ENCODE measurements at regions of chr19 and their contacts with region 1.

Region 1: GRCh38 chr19:46487802-46488445 is 7.7 kb downstream of the PNMA8B start:
- DNase-seq: peak; percentile 89
- H3K4me3 ChIP-seq: peak overlapping the region; percentile 40 to 52
- H3K27ac ChIP-seq: no peak overlapping the region
- H3K4me1 ChIP-seq: peaks cover 0 to 14% of the 10 kb centered on the region in 2 experiments; a peak in 1 of 4 replicates
- H3K27me3 ChIP-seq: no peaks in the 10 kb centered on the region
- CTCF ChIP-seq: peak; percentile 88
- EP300 ChIP-seq: no peak
- RAD21 ChIP-seq: peak; percentile 96

Region 2: GRCh38 chr19:46283771-46284170 is 204.2 kb before region 1 on chr19:
- CTCF ChIA-PET with region 1: interaction called, 24 read pairs
- POLR2A ChIA-PET with region 1: no interaction called
- DNase-seq: no peak
- H3K4me3 ChIP-seq: no peak overlapping the region
- H3K27ac ChIP-seq: no peak overlapping the region
- H3K4me1 ChIP-seq: no peaks in the 10 kb centered on the region
- H3K27me3 ChIP-seq: no peaks in the 10 kb centered on the region; the same call in 1 of the 2 replicates
- CTCF ChIP-seq: no peak
- EP300 ChIP-seq: no peak
- RAD21 ChIP-seq: no peak

Region 3: GRCh38 chr19:46346821-46347571 is 140.9 kb before region 1 on chr19 and contains the start of gene PPP5C:
- CTCF ChIA-PET with region 1: interaction called, 12 read pairs
- POLR2A ChIA-PET with region 1: no interaction called
- DNase-seq: peak; percentile 97
- H3K4me3 ChIP-seq: peak within 1 kb of the TSS; percentile 88 to 98
- H3K27ac ChIP-seq: peak within 1 kb of the TSS; percentile 67 to 88
- H3K4me1 ChIP-seq: peaks cover 21 to 34% of the 10 kb centered on the region in 2 experiments
- H3K27me3 ChIP-seq: peaks cover 4% of the 10 kb centered on the region; the same call in 1 of the 2 replicates
- CTCF ChIP-seq: peak; percentile 97
- EP300 ChIP-seq: no peak; a peak in 1 of 4 replicates
- RAD21 ChIP-seq: peak; percentile 52
- polyA plus RNA-seq, gene PPP5C: 131 and 162 TPM in 2 replicates

Region 4: GRCh38 chr19:46404055-46404752 is 83.7 kb before region 1 on chr19:
- CTCF ChIA-PET with region 1: interaction called, 463 read pairs
- POLR2A ChIA-PET with region 1: no interaction called
- DNase-seq: no peak
- H3K4me3 ChIP-seq: no peak overlapping the region
- H3K27ac ChIP-seq: no peak overlapping the region
- H3K4me1 ChIP-seq: no peaks in the 10 kb centered on the region
- H3K27me3 ChIP-seq: no peaks in the 10 kb centered on the region
- CTCF ChIP-seq: no peak
- EP300 ChIP-seq: no peak
- RAD21 ChIP-seq: no peak

Region 5: GRCh38 chr19:46426506-46427162 is 61.3 kb before region 1 on chr19:
- CTCF ChIA-PET with region 1: interaction called, 14 read pairs
- POLR2A ChIA-PET with region 1: no interaction called
- DNase-seq: peak; percentile 94
- H3K4me3 ChIP-seq: peak overlapping the region; percentile 62 to 66
- H3K27ac ChIP-seq: peak overlapping the region in 1 of 2 experiments; percentile 12; a peak in 1 of 4 replicates
- H3K4me1 ChIP-seq: peaks cover 0 to 19% of the 10 kb centered on the region in 2 experiments; a peak in 2 of 4 replicates
- H3K27me3 ChIP-seq: no peaks in the 10 kb centered on the region
- CTCF ChIP-seq: no peak
- EP300 ChIP-seq: no peak
- RAD21 ChIP-seq: no peak

Region 6: GRCh38 chr19:46451352-46451751 is 36.6 kb before region 1 on chr19:
- CTCF ChIA-PET with region 1: interaction called, 11 read pairs
- POLR2A ChIA-PET with region 1: no interaction called
- DNase-seq: no peak
- H3K4me3 ChIP-seq: no peak overlapping the region
- H3K27ac ChIP-seq: no peak overlapping the region
- H3K4me1 ChIP-seq: no peaks in the 10 kb centered on the region; a peak in 1 of 4 replicates
- H3K27me3 ChIP-seq: no peaks in the 10 kb centered on the region
- CTCF ChIP-seq: no peak
- EP300 ChIP-seq: no peak
- RAD21 ChIP-seq: no peak

Region 7: GRCh38 chr19:46471116-46471733 is 16.7 kb before region 1 on chr19 and contains the start of gene PNMA8A:
- CTCF ChIA-PET with region 1: interaction called, 11 read pairs
- POLR2A ChIA-PET with region 1: no interaction called
- DNase-seq: peak; percentile 97
- H3K4me3 ChIP-seq: peak within 1 kb of the TSS; percentile 63 to 68
- H3K27ac ChIP-seq: peak within 1 kb of the TSS; percentile 68 to 81
- H3K4me1 ChIP-seq: peaks cover 16 to 23% of the 10 kb centered on the region in 2 experiments; a peak in 2 of 4 replicates
- H3K27me3 ChIP-seq: no peaks in the 10 kb centered on the region
- CTCF ChIP-seq: peak; percentile 30
- EP300 ChIP-seq: no peak
- RAD21 ChIP-seq: no peak
- polyA plus RNA-seq, gene PNMA8A: 10.2 and 13.8 TPM in 2 replicates

Measured in SK-N-SH (cell line).